GM12878 (cell line): ENCODE measurements at regions of chr9 and their contacts with region 1.

Region 1: DNA sequence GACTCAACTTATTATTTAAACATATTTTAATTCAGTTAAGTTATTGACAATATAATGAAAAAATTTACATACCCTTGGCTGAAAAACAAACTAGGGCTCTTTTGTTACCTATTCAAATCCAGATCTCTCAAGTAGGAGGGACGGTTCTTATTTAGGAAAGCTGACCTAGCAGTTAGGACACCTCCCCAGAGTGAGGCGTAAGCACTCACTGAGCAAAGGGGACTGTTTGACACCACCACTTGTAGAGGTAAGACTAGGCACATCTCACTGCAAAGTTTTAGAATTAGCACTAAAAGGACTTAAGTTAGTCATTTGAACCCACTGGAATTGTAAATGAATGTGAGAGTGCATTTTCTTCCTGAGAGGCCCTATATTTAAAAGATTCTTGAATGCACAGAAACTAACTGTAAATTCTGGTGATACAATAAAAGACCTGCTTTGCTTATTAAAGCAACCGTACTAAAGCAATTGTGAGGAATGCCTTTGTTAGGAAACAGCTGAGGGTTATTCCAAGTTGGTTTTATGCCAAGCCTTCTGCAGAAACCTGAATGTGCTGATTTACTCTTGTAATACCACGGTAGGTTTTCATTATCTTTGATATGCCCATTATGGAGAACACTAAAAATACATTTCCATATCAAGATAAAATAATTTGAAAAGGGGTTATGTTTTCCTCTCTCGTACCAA is 16.2 kb downstream of the HACD4 start:
- DNase-seq: no peak
- ATAC-seq: no peak
- H3K4me3 ChIP-seq: no peak overlapping the region
- H3K27ac ChIP-seq: no peak overlapping the region
- H3K4me1 ChIP-seq: no peaks in the 10 kb centered on the region
- H3K27me3 ChIP-seq: no peaks in the 10 kb centered on the region
- CTCF ChIP-seq: no peak
- EP300 ChIP-seq: no peak
- POLR2A ChIP-seq: no peak
- RAD21 ChIP-seq: no peak

Region 2: GRCh38 chr9:21031091-21031807 is 16.0 kb after region 1 on chr9 and contains the start of gene HACD4:
- CTCF ChIA-PET with region 1: interaction called, 3 read pairs
- POLR2A ChIA-PET with region 1: interaction called, 4 read pairs
- RAD21 ChIA-PET with region 1: no interaction called
- SMC1A ChIA-PET with region 1: interaction called, 6 read pairs
- in situ Hi-C with region 1: no loop called
- intact Hi-C with region 1: loop called (anchors 2 kb)
- DNase-seq: peak; percentile 27
- ATAC-seq: peak; percentile 90
- H3K4me3 ChIP-seq: peak within 1 kb of the TSS; percentile 81
- H3K27ac ChIP-seq: peak within 1 kb of the TSS; percentile 62
- H3K4me1 ChIP-seq: peaks cover 5% of the 10 kb centered on the region
- H3K27me3 ChIP-seq: no peaks in the 10 kb centered on the region
- CTCF ChIP-seq: no peak
- EP300 ChIP-seq: no peak
- POLR2A ChIP-seq: peak; percentile 75
- RAD21 ChIP-seq: no peak
- polyA plus RNA-seq, gene HACD4: 3.2 to 3.3 TPM